ENCODE measurements at regions of chr7 and their contacts with region 1.

Region 1: DNA sequence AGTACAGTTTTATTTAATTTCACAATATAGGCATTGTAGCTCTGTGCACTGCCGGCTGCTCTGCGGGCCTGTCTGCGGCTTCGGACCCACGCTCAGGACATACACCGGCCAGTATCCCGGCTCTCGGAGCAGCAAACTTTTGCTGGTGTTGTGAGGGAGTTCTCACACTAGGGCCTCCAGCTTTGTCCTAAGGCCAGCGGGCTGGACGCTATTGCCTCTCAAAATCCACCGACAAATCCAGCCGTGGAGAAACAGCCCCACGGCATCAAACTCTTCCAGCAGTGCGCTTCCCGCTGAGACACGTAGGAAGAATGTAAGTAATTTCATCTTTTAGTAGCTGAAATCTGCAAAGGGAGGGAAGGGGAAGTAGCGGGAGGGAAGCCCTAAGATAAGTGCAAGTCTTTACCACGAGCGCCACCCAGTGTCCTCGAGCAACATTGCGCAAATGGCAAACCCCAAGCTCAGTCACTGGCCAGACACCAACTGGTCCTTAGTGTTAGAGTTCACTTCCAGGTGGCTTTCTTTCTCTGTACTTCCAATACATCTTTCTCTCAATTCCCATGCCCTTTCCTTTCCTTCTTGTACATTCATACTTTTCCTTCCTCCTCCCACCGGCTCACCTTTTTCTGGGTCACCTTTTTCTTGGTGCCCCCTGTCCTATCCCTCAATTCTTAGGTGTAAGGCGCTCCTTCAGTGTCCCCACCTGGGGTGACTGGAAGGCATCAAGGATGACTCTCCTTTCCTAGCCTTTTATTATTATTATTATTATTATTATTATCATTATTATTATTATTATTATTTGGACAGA is 3.0 kb upstream of the DLX5 start:
- DNase-seq: peak; percentile 76
- H3K4me3 ChIP-seq: peak overlapping the region in 2 of 3 experiments; percentile 11 to 12
- H3K27ac ChIP-seq: no peak overlapping the region
- H3K4me1 ChIP-seq: peaks cover 4% of the 10 kb centered on the region
- H3K27me3 ChIP-seq: peaks cover 51 to 64% of the 10 kb centered on the region in 2 experiments
- CTCF ChIP-seq: peak; percentile 85 to 86
- POLR2A ChIP-seq: no peak

Region 2: DNA sequence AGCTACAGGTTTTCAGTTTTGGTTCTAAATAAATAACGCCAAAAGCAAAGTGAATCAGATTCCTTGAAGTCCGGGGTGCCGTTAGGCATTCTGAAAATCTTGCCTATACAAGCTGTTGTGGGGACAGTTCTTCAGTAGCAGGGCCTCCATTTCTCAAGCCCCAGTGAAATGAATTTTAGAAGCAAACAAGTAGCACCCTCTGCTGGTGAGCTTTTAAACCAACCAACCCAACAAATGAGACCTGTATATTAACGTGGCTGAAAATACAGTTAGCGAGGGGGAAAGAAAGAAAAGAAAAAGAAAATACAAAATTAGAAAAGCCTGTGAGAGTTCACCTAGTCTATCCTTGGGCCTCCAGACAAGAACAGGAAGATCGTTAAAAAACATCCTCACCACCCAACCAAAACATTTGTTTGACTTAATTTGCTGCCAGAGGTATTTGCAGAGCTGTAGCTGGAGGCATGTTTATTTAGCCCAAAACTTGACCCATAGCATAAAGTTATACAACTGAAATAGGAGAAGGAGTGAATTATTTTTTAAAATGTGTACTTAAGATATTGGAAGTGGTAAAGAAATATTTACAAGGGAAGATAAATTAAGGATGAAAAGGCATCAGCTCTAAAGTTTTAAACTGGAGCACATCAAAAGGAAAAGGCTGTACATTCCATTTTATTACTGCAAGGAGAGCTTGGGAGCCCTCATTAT is 1156.4 kb before region 1 on chr7:
- CTCF ChIA-PET with region 1: interaction called, 19 read pairs
- POLR2A ChIA-PET with region 1: no interaction called
- dilution Hi-C with region 1: no loop called
- intact Hi-C with region 1: no loop called
- DNase-seq: peak; percentile 72
- H3K4me3 ChIP-seq: no peak overlapping the region
- H3K27ac ChIP-seq: no peak overlapping the region
- H3K4me1 ChIP-seq: peaks cover 29% of the 10 kb centered on the region
- H3K27me3 ChIP-seq: no peaks in the 10 kb centered on the region
- CTCF ChIP-seq: peak; percentile 49 to 66
- POLR2A ChIP-seq: no peak

Region 3: GRCh38 chr7:95933618-95934017 is 1094.0 kb before region 1 on chr7:
- CTCF ChIA-PET with region 1: interaction called, 16 read pairs
- POLR2A ChIA-PET with region 1: no interaction called
- dilution Hi-C with region 1: no loop called
- intact Hi-C with region 1: no loop called
- DNase-seq: no peak
- H3K4me3 ChIP-seq: no peak overlapping the region
- H3K27ac ChIP-seq: no peak overlapping the region
- H3K4me1 ChIP-seq: no peaks in the 10 kb centered on the region
- H3K27me3 ChIP-seq: peaks cover 21 to 39% of the 10 kb centered on the region in 2 experiments
- CTCF ChIP-seq: no peak
- POLR2A ChIP-seq: no peak

Region 4: DNA sequence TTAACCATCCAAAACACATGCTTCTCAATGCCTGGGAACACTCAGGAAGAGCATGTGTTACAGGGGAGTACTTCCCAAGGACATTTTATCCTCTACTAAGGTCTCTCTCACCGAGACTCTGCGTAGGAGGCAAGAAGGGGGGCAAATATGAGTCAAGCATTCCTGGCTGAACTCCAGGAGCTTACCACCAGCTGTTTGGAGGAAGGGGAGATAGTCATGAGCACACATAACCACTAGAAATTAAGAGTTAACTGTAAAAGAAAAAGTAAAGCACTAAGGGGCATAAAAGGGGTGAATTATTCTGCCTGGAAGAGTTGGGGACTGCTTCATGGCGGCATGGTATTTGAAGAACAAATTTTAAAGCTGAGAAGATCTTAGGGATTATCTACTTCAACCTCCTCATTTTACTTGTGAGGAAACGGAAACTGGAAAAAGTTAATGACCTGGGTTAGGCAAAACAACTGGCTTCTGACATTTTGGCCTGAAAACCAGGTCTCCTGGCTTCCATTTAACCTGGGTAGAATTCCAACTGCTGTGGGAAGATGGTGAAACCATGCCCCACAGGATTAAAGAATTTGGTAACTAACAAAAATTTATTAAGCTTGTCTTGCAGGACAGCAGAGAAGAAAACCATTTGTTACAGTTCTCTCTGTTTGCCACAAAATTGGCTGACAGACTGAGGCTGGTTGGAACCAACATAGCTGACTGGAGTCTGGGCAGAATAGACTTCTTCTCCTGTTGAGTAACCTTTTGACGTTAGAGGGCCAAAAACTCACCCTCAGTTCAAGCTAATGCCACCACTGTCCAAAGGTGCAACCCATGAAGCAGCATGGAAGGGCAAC is 791.2 kb before region 1 on chr7:
- CTCF ChIA-PET with region 1: interaction called, 7 read pairs
- POLR2A ChIA-PET with region 1: no interaction called
- dilution Hi-C with region 1: no loop called
- intact Hi-C with region 1: loop called (anchors 1 kb)
- DNase-seq: peak; percentile 97
- H3K4me3 ChIP-seq: no peak overlapping the region
- H3K27ac ChIP-seq: peak overlapping the region; percentile 2
- H3K4me1 ChIP-seq: peaks cover 18% of the 10 kb centered on the region
- H3K27me3 ChIP-seq: no peaks in the 10 kb centered on the region
- CTCF ChIP-seq: no peak
- POLR2A ChIP-seq: no peak

Region 5: DNA sequence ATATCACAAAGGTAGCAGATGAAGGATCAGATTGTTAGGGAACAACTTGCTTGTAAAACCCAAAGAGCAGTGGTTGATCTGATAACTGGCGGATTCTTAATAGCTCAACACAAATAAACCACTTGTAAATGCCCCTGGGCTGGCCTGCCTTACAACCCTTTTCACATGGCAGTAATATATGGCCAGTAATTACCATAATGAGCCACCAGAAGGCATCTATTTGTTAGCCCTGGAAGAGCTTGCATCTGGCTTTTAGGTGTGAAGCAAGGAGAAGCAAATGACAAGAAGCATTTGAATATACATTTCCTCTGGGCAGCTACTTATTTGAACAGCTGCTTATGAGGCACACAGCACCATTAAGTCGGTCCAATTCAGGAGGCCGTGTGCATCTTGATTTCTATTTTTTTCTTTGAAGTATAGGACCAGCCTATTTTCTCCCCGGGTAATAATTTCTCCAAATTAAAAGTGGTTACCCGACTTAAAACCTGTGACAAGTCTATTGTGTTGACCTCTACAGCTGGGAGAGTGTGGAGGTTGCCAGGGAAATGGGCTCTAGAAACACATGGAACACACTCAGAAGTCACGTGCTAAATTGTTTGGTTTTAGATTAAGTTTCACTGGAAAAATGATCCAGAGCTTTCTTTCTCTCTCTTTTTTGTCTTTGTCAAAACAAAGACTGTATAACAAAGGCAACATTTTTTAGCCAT is 431.4 kb before region 1 on chr7:
- CTCF ChIA-PET with region 1: interaction called, 48 read pairs
- POLR2A ChIA-PET with region 1: no interaction called
- dilution Hi-C with region 1: no loop called
- intact Hi-C with region 1: loop called (anchors 1 kb)
- DNase-seq: peak; percentile 21
- H3K4me3 ChIP-seq: no peak overlapping the region
- H3K27ac ChIP-seq: no peak overlapping the region
- H3K4me1 ChIP-seq: no peaks in the 10 kb centered on the region
- H3K27me3 ChIP-seq: peaks cover 2 to 7% of the 10 kb centered on the region in 2 experiments
- CTCF ChIP-seq: peak in 1 of 2 donors; percentile 10
- POLR2A ChIP-seq: no peak

Region 6: DNA sequence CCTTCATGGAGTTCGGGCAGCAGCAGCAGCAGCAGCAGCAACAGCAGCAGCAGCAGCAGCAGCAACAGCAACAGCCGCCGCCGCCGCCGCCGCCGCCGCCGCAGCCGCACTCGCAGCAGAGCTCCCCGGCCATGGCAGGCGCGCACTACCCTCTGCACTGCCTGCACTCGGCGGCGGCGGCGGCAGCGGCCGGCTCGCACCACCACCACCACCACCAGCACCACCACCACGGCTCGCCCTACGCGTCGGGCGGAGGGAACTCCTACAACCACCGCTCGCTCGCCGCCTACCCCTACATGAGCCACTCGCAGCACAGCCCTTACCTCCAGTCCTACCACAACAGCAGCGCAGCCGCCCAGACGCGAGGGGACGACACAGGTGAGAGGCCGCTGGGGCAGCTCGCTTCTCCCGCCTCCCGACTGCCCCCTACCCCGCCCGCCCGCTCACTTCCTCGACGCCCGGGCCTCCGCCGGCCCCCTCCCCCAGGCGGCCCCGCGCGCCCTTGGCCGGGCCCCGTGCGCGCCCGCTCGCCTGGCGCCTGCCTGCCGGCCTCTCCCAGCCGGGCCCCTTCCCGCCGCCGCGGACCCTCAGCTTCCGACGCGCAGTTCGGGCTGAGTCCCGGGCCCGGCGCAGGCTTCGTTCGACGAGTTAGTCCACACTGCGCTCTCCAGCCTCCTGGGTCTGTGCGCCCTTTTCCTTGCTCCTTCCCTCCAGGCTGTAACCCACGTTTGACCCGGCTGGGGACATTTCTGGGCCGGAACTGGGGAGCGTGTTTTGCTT is 21.4 kb before region 1 on chr7:
- CTCF ChIA-PET with region 1: interaction called, 11 read pairs
- POLR2A ChIA-PET with region 1: no interaction called
- dilution Hi-C with region 1: no loop called
- intact Hi-C with region 1: loop called (anchors 2 kb)
- DNase-seq: peak; percentile 29
- H3K4me3 ChIP-seq: peak overlapping the region in 1 of 3 experiments; percentile 29
- H3K27ac ChIP-seq: no peak overlapping the region
- H3K4me1 ChIP-seq: peaks cover 3% of the 10 kb centered on the region
- H3K27me3 ChIP-seq: peaks cover 81 to 94% of the 10 kb centered on the region in 2 experiments
- CTCF ChIP-seq: no peak
- POLR2A ChIP-seq: no peak

Region 7: DNA sequence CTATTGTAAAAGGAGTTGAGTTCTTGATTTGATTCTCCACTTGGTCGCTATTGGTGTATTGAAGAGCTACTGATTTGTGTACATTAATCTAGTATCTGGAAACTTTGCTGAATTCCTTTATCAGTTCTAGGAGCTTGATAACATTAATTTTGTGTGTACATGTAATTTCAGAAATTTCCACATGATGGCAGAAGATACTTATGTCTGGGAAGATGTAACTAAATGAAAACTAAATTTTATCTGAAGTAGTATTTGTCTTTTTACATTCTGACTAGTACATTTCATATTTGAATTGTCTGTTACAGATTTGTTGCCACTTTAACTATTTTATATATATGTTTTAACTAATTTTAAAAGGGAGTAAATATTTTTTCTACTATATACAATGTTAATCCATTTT is 117.4 kb after region 1 on chr7:
- CTCF ChIA-PET with region 1: no interaction called
- POLR2A ChIA-PET with region 1: no interaction called
- dilution Hi-C with region 1: no loop called
- intact Hi-C with region 1: no loop called
- DNase-seq: peak; percentile 58
- H3K4me3 ChIP-seq: no peak overlapping the region
- H3K27ac ChIP-seq: no peak overlapping the region
- H3K4me1 ChIP-seq: no peaks in the 10 kb centered on the region
- H3K27me3 ChIP-seq: no peaks in the 10 kb centered on the region
- CTCF ChIP-seq: peak; percentile 14 to 16
- POLR2A ChIP-seq: no peak

Region 8: GRCh38 chr7:98771519-98771918 is 1743.9 kb after region 1 on chr7:
- CTCF ChIA-PET with region 1: no interaction called
- POLR2A ChIA-PET with region 1: no interaction called
- dilution Hi-C with region 1: no loop called
- intact Hi-C with region 1: no loop called
- DNase-seq: no peak
- H3K4me3 ChIP-seq: no peak overlapping the region
- H3K27ac ChIP-seq: no peak overlapping the region
- H3K4me1 ChIP-seq: no peaks in the 10 kb centered on the region
- H3K27me3 ChIP-seq: no peaks in the 10 kb centered on the region
- CTCF ChIP-seq: no peak
- POLR2A ChIP-seq: no peak

Measured in endothelial cell of umbilical vein (primary cell).